OCI-LY7 (cell line): ENCODE measurements at regions of chr17 and their contacts with region 1.

Region 1: DNA sequence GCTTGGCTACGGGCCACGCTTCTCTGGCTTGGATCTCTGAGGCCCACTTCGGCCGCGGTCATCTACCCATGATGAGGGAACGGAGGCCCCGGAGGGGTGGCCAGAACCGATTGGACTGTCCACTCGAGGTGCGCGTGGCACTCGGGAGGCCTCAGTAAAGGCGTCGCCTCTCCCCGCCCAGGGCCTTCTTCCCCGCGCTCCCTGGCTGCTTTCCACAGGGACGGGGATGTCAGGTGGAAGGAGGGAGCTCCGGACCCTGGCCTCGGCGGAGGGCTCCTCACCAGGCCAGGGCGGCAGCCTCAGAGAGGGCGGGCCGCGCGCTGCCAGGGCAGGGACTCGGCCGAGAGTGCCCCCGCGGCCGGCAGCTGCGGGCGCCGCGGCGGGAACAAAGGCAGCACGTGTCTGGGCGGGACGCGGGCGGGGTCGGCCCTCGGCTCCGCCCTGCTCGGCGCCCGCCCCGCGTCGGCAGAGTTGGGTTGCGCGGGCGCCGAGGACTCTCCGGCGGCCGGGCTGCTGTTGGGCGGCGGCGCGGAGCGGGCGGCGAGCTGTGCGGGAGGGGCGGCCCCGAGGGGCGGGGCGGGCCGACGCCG is 587 bp upstream of the CDK5R1 start:
- DNase-seq: peak; percentile 77
- H3K4me3 ChIP-seq: peak overlapping the region; percentile 64
- H3K27ac ChIP-seq: no peak overlapping the region
- H3K4me1 ChIP-seq: peaks cover 36% of the 10 kb centered on the region
- CTCF ChIP-seq: no peak

Region 2: DNA sequence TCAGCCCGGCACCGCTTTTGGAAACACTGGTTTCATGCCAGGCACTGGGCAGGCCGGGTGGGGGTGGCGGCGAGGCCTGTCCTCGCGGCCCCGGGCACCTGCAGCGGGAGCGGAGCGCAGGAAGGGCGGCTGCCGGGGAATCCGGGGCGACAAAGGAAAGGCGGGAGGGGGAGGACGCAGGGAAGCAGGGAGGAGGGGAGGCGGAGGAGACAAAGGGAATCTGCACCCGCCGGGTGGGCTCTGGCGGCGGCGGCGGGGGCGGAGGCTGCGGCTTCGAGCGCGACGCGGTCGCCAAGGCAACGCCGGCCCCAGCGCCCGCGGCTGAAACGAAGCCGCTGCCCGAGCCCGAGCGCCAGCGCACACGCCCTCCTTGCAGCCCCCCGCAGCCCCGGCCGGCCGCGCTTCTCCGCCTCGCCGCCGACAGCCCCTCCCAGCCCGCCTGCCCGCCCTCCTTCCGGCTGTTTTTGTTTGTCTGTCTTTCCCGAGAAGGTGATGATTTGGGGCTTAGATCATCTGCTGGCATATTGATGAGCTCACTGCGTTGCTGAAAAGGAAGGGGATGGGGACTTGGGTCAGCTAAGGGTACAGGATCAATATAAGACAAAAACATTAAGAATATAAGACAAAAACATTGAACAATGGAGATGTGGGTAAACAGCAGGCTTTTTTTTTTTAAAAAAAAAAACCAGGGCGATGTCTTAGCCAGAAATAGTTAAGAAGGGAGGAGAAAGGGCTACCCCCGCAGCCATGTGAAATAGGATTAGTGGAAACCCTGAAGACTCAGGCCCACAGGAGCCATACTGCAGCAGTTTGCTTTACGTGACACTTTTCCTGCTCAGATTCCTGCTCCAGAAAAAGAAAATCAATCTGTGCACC is 33.3 kb after region 1 on chr17:
- CTCF ChIA-PET with region 1: no interaction called
- POLR2A ChIA-PET with region 1: interaction called, 7 read pairs
- intact Hi-C with region 1: loop called (anchors 1 kb)
- DNase-seq: no peak
- H3K4me3 ChIP-seq: peak overlapping the region; percentile 29
- H3K27ac ChIP-seq: no peak overlapping the region
- H3K4me1 ChIP-seq: peaks cover 46% of the 10 kb centered on the region
- CTCF ChIP-seq: no peak

Region 3: GRCh38 chr17:32609085-32609484 is 122.9 kb after region 1 on chr17:
- CTCF ChIA-PET with region 1: no interaction called
- POLR2A ChIA-PET with region 1: no interaction called
- intact Hi-C with region 1: loop called (anchors 1 kb)
- DNase-seq: peak; percentile 78
- H3K4me3 ChIP-seq: no peak overlapping the region
- H3K27ac ChIP-seq: no peak overlapping the region
- H3K4me1 ChIP-seq: no peaks in the 10 kb centered on the region
- CTCF ChIP-seq: peak; percentile 83

Region 4: DNA sequence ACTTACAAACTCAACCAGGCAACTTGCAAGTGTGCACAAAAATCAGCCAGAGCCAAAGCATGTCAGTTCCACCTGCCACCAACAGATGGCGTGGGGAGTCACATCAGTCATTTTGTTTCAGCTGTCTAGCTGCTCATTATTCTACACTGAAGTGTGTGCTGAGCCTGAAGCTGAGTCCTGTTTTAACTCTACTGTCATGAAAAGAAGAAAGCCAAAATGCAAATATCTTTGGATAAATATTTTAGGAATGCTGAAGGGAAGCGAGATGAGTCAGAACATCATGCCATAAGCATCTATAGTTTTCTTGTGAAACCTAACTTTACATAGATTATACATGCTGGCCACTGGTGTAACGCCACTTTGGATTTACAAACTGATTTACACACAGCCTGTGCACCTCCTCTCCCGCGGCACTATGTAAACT is 173.2 kb after region 1 on chr17:
- CTCF ChIA-PET with region 1: no interaction called
- POLR2A ChIA-PET with region 1: no interaction called
- intact Hi-C with region 1: loop called (anchors 1 kb)
- DNase-seq: peak; percentile 63
- H3K4me3 ChIP-seq: no peak overlapping the region
- H3K27ac ChIP-seq: no peak overlapping the region
- H3K4me1 ChIP-seq: no peaks in the 10 kb centered on the region
- CTCF ChIP-seq: peak; percentile 95

Region 5: GRCh38 chr17:32671896-32672295 is 185.7 kb after region 1 on chr17:
- CTCF ChIA-PET with region 1: no interaction called
- POLR2A ChIA-PET with region 1: no interaction called
- intact Hi-C with region 1: loop called (anchors 1 kb)
- DNase-seq: no peak
- H3K4me3 ChIP-seq: no peak overlapping the region
- H3K27ac ChIP-seq: no peak overlapping the region
- H3K4me1 ChIP-seq: no peaks in the 10 kb centered on the region
- CTCF ChIP-seq: no peak

Region 6: GRCh38 chr17:32755045-32755805 is 269.0 kb after region 1 on chr17:
- CTCF ChIA-PET with region 1: no interaction called
- POLR2A ChIA-PET with region 1: no interaction called
- intact Hi-C with region 1: loop called (anchors 1 kb)
- DNase-seq: peak; percentile 55
- H3K4me3 ChIP-seq: no peak overlapping the region
- H3K27ac ChIP-seq: no peak overlapping the region
- H3K4me1 ChIP-seq: no peaks in the 10 kb centered on the region
- CTCF ChIP-seq: peak; percentile 75

Region 7: DNA sequence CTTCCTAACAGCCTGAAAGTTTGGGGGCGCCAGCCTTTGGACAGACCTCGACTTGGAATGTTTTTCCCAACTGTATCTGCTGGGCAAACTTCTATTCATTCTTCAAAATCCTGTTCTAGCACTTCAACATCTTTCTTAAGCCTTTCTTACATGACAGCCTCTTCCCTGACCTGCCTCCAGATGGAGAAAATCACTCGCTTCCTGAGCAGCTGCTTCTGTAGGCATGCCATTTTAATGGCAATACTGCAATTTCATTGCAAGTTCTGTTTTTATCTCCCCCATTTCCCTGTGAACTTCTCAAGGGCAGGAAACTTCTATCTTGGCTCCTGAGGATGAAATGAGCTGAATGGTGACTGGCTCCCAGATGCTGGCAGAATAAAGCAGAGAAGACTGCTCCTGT is 935.7 kb after region 1 on chr17:
- CTCF ChIA-PET with region 1: no interaction called
- POLR2A ChIA-PET with region 1: no interaction called
- intact Hi-C with region 1: no loop called
- DNase-seq: no peak
- H3K4me3 ChIP-seq: no peak overlapping the region
- H3K27ac ChIP-seq: no peak overlapping the region
- H3K4me1 ChIP-seq: no peaks in the 10 kb centered on the region
- CTCF ChIP-seq: no peak